ENCODE measurements at regions of chr2 and their contacts with region 1.

Region 1: GRCh38 chr2:200713003-200713703 is 98.6 kb upstream of the BZW1 start:
- DNase-seq: peak; percentile 87 to 97
- ATAC-seq: peak; percentile 94 to 99 (median 99)
- H3K4me3 ChIP-seq: peak overlapping the region; percentile 6
- H3K4me3 Mint-ChIP-seq: peak overlapping the region; percentile 78
- H3K27ac ChIP-seq: peak overlapping the region; percentile 97
- H3K27ac Mint-ChIP-seq: peak overlapping the region; percentile 96 to 98
- H3K4me1 ChIP-seq: peaks cover 9% of the 10 kb centered on the region
- H3K4me1 Mint-ChIP-seq: peaks cover 12 to 13% of the 10 kb centered on the region in 2 donors
- H3K27me3 ChIP-seq: no peaks in the 10 kb centered on the region
- H3K27me3 Mint-ChIP-seq: peaks cover 0 to 7% of the 10 kb centered on the region in 2 donors
- CTCF ChIP-seq: peak; percentile 74

Region 2: DNA sequence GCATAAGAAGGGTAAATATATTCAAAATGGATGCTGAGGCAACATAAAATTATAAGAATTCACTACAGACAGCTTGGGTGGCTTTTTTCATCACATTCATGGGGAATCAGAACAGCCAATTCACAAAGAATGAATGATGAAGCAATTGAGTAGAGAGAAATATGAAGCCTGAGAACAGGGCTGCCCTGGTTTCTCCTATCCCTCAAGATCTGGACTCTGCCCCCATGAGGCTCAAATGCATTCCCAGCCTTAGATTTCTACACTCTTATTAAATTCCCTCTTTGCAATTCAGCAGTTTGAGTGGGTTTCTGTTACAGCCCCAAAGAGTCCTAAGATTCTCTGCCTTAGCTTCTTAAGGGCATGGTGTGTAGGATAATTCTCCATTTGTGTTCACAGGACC is 585.3 kb before region 1 on chr2:
- intact Hi-C with region 1: no loop called
- DNase-seq: no peak
- ATAC-seq: no peak
- H3K4me3 ChIP-seq: no peak overlapping the region
- H3K4me3 Mint-ChIP-seq: no peak overlapping the region
- H3K27ac ChIP-seq: no peak overlapping the region
- H3K27ac Mint-ChIP-seq: no peak overlapping the region
- H3K4me1 ChIP-seq: no peaks in the 10 kb centered on the region
- H3K4me1 Mint-ChIP-seq: no peaks in the 10 kb centered on the region
- H3K27me3 ChIP-seq: no peaks in the 10 kb centered on the region
- H3K27me3 Mint-ChIP-seq: peaks cover 3 to 8% of the 10 kb centered on the region in 2 donors
- CTCF ChIP-seq: no peak

Region 3: GRCh38 chr2:200274116-200275075 is 438.8 kb before region 1 on chr2:
- intact Hi-C with region 1: no loop called
- DNase-seq: no peak
- ATAC-seq: no peak
- H3K4me3 ChIP-seq: no peak overlapping the region
- H3K4me3 Mint-ChIP-seq: no peak overlapping the region
- H3K27ac ChIP-seq: no peak overlapping the region
- H3K27ac Mint-ChIP-seq: no peak overlapping the region
- H3K4me1 ChIP-seq: no peaks in the 10 kb centered on the region
- H3K4me1 Mint-ChIP-seq: no peaks in the 10 kb centered on the region
- H3K27me3 ChIP-seq: no peaks in the 10 kb centered on the region
- H3K27me3 Mint-ChIP-seq: peaks cover 8 to 36% of the 10 kb centered on the region in 2 donors
- CTCF ChIP-seq: no peak

Region 4: DNA sequence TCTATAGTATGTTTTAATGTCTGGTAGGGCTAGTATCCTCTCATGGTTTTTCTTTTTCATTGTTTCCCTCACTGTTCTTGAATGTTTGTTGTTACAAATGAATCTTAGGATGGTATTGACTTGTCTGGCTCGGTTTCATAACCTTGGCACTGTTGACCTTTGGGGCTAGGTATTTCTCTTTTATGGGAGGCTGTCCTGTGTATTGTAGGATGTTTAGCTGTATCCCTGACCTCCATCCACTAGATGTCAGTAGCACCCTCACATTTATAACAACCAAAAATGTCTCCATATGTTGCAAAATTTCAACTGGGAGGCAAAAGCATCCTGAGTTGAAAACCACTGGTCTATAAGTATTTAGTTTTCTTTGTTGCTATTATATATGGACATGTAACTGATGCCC is 134.4 kb before region 1 on chr2:
- intact Hi-C with region 1: loop called (anchors 10 kb)
- DNase-seq: peak in 1 of 2 donors; percentile 50
- ATAC-seq: peak; percentile 46 to 49 (median 47)
- H3K4me3 ChIP-seq: no peak overlapping the region
- H3K4me3 Mint-ChIP-seq: no peak overlapping the region
- H3K27ac ChIP-seq: no peak overlapping the region
- H3K27ac Mint-ChIP-seq: no peak overlapping the region
- H3K4me1 ChIP-seq: no peaks in the 10 kb centered on the region
- H3K4me1 Mint-ChIP-seq: no peaks in the 10 kb centered on the region
- H3K27me3 ChIP-seq: no peaks in the 10 kb centered on the region
- H3K27me3 Mint-ChIP-seq: no peaks in the 10 kb centered on the region
- CTCF ChIP-seq: peak; percentile 20

Region 5: DNA sequence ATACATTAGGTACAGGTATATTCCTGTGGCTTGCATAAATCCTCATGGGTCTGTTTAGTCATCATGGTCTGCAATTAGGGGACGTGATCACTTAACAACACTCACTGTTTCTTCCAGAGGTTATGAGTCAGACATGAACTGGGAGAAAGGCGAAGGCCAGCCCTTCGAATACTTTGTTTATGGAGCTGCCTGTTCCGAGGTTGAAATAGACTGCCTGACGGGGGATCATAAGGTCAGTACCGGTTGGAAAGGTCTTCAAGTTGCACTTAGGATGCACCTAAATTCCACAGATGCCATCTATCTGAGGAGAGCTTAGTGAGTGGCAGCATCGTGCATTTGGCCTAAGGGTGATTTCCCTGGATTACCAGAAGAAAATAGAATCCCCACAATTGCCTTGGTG is 50.4 kb before region 1 on chr2:
- intact Hi-C with region 1: no loop called
- DNase-seq: no peak
- ATAC-seq: no peak
- H3K4me3 ChIP-seq: no peak overlapping the region
- H3K4me3 Mint-ChIP-seq: no peak overlapping the region
- H3K27ac ChIP-seq: no peak overlapping the region
- H3K27ac Mint-ChIP-seq: no peak overlapping the region
- H3K4me1 ChIP-seq: no peaks in the 10 kb centered on the region
- H3K4me1 Mint-ChIP-seq: no peaks in the 10 kb centered on the region
- H3K27me3 ChIP-seq: no peaks in the 10 kb centered on the region
- H3K27me3 Mint-ChIP-seq: peaks cover 0 to 7% of the 10 kb centered on the region in 2 donors
- CTCF ChIP-seq: no peak

Region 6: GRCh38 chr2:200811336-200812121 is 98.4 kb after region 1 on chr2 and contains the start of gene BZW1:
- intact Hi-C with region 1: loop called (anchors 1 kb)
- DNase-seq: peak; percentile 93 to 98
- ATAC-seq: peak; percentile 78 to 92 (median 78)
- H3K4me3 ChIP-seq: peak within 1 kb of the TSS; percentile 61
- H3K4me3 Mint-ChIP-seq: peak within 1 kb of the TSS; percentile 95
- H3K27ac ChIP-seq: peak within 1 kb of the TSS; percentile 99
- H3K27ac Mint-ChIP-seq: peak within 1 kb of the TSS; percentile 93 to 98
- H3K4me1 ChIP-seq: peaks cover 18% of the 10 kb centered on the region
- H3K4me1 Mint-ChIP-seq: peaks cover 53 to 56% of the 10 kb centered on the region in 2 donors
- H3K27me3 ChIP-seq: no peaks in the 10 kb centered on the region
- H3K27me3 Mint-ChIP-seq: no peaks in the 10 kb centered on the region
- CTCF ChIP-seq: no peak
- total RNA-seq, gene BZW1: 393 to 417 (median 411) TPM

Region 7: DNA sequence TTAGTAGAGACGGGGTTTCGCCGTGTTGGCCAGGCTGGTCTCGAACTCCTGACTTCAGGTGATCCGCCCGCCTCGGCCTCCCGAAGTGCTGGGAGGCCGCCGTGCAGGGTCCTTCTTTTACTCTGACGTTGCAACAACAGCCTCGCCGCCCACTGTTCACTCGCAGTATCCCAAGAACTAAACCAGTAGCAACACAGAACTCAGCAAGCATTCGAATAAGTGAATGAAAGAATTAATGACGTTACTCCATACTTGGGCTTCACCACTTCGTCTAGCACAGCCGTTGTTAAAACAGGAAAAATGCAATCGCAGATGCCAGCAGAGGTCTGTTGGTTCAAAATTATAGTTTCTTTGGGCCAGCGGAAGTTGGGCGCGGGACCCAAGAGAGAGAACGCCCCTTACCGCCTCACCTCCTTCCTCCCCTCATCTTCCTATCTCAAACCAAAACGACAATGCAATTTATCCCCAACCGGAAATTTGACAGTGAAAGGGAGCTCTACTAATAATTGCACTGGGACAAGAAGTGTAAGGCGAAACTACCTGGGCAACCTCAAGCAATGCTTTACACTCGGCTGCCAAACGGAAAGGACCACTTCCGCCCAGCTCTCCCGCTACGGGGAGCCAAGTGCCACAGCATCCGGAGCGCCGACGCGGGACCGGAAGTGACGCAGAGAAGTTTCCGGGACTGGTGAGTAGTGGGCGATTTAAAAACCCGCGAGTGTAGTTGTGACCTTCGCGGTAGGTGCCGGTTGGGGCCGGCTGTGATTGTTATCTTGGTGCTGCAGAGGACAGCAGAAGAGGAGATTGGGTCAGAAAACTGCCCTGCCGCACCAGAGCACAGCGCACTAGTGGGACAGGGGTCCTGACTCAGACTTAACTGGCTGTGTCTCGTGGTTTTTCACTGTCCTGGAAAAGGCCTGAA is 175.8 kb after region 1 on chr2 and contains the starts of genes NIF3L1 and PPIL3:
- intact Hi-C with region 1: loop called (anchors 1 kb)
- DNase-seq: peak; percentile 95 to 99
- ATAC-seq: peak; percentile 76 to 91 (median 84)
- H3K4me3 ChIP-seq: peak within 1 kb of the TSS; percentile 72
- H3K4me3 Mint-ChIP-seq: peak within 1 kb of the TSS; percentile 99
- H3K27ac ChIP-seq: peak within 1 kb of the TSS; percentile 91
- H3K27ac Mint-ChIP-seq: peak within 1 kb of the TSS; percentile 99 to 100
- H3K4me1 ChIP-seq: peaks cover 28% of the 10 kb centered on the region
- H3K4me1 Mint-ChIP-seq: peaks cover 39 to 49% of the 10 kb centered on the region in 2 donors
- H3K27me3 ChIP-seq: no peaks in the 10 kb centered on the region
- H3K27me3 Mint-ChIP-seq: no peaks in the 10 kb centered on the region
- CTCF ChIP-seq: no peak
- total RNA-seq, gene NIF3L1: 8.8 to 13.3 (median 9.6) TPM
- total RNA-seq, gene PPIL3: 30.0 to 39.9 (median 33.3) TPM

Region 8: DNA sequence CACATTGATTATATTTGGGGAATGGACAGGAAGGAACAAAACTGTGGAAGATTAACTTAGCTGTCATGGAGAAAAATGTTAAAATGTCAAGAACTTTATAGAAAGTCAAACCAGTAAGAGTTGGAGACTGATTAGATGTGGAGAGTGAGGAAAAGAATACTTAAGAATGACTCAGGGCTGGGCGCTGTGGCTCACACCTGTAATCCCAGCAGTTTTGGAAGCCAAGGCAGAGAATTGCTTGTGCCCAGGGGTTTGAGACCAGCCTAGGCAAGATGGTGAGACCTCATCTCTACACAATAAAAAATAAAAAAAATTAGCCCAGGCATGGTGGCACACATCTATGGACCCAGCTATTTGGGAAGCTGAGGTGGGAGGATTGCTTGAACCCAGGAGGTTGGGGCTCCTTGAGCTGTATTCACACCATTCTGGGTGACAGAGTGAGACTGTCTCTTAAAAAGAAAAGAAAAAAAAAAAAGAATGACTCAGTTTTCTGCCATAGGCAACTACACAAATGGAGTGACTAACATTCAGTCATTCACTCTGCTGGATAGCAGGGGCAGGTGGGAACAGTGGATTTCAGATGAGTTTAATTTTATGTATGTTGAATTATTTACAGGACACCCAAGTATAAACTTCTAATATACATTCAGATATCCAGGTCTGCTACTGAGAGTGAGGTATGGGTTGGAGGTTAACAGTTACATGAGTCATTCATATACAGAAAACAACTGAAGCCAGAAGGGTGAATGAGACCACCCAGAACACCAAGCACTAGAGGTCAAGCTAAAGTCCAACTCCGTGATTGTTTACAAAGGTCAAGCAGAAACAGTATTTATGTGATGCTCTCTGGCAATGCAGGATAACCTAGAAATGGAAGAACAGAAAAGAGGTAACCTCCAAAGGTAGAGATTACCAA is 216.4 kb after region 1 on chr2:
- intact Hi-C with region 1: no loop called
- DNase-seq: no peak
- ATAC-seq: no peak
- H3K4me3 ChIP-seq: no peak overlapping the region
- H3K4me3 Mint-ChIP-seq: no peak overlapping the region
- H3K27ac ChIP-seq: no peak overlapping the region
- H3K27ac Mint-ChIP-seq: peak overlapping the region; percentile 9 to 49
- H3K4me1 ChIP-seq: no peaks in the 10 kb centered on the region
- H3K4me1 Mint-ChIP-seq: no peaks in the 10 kb centered on the region
- H3K27me3 ChIP-seq: no peaks in the 10 kb centered on the region
- H3K27me3 Mint-ChIP-seq: no peaks in the 10 kb centered on the region
- CTCF ChIP-seq: no peak

Region 9: GRCh38 chr2:201071479-201072200 is 358.5 kb after region 1 on chr2 and contains the starts of genes HYCC2 and NDUFB3:
- intact Hi-C with region 1: loop called (anchors 2 kb)
- DNase-seq: peak; percentile 90 to 98
- ATAC-seq: peak; percentile 92 to 99 (median 96)
- H3K4me3 ChIP-seq: peak within 1 kb of the TSS; percentile 72
- H3K4me3 Mint-ChIP-seq: peak within 1 kb of the TSS; percentile 97
- H3K27ac ChIP-seq: peak within 1 kb of the TSS; percentile 90
- H3K27ac Mint-ChIP-seq: peak within 1 kb of the TSS; percentile 93 to 100
- H3K4me1 ChIP-seq: peaks cover 12% of the 10 kb centered on the region
- H3K4me1 Mint-ChIP-seq: peaks cover 43 to 46% of the 10 kb centered on the region in 2 donors
- H3K27me3 ChIP-seq: no peaks in the 10 kb centered on the region
- H3K27me3 Mint-ChIP-seq: no peaks in the 10 kb centered on the region
- CTCF ChIP-seq: peak; percentile 30
- total RNA-seq, gene HYCC2: 54.2 to 62.5 (median 60.1) TPM
- total RNA-seq, gene NDUFB3: 23.5 to 32.7 (median 30.7) TPM

Region 10: GRCh38 chr2:201231781-201232466 is 518.8 kb after region 1 on chr2:
- intact Hi-C with region 1: loop called (anchors 1 kb)
- DNase-seq: peak; percentile 81 to 97
- ATAC-seq: peak; percentile 68 to 85 (median 71)
- H3K4me3 ChIP-seq: no peak overlapping the region
- H3K4me3 Mint-ChIP-seq: peak overlapping the region; percentile 93
- H3K27ac ChIP-seq: peak overlapping the region; percentile 13
- H3K27ac Mint-ChIP-seq: peak overlapping the region; percentile 97
- H3K4me1 ChIP-seq: peaks cover 38% of the 10 kb centered on the region
- H3K4me1 Mint-ChIP-seq: peaks cover 67 to 71% of the 10 kb centered on the region in 2 donors
- H3K27me3 ChIP-seq: no peaks in the 10 kb centered on the region
- H3K27me3 Mint-ChIP-seq: no peaks in the 10 kb centered on the region
- CTCF ChIP-seq: peak; percentile 96

Region 11: GRCh38 chr2:202033321-202034248 is 1320.4 kb after region 1 on chr2 and contains the start of gene FZD7:
- intact Hi-C with region 1: loop called (anchors 5 kb)
- DNase-seq: peak; percentile 78 to 89
- ATAC-seq: peak; percentile 83 to 91 (median 86)
- H3K4me3 ChIP-seq: peak within 1 kb of the TSS; percentile 94
- H3K4me3 Mint-ChIP-seq: peak within 1 kb of the TSS; percentile 92
- H3K27ac ChIP-seq: peak within 1 kb of the TSS; percentile 38
- H3K27ac Mint-ChIP-seq: peak within 1 kb of the TSS in 1 of 2 donors; percentile 41
- H3K4me1 ChIP-seq: peaks cover 27% of the 10 kb centered on the region
- H3K4me1 Mint-ChIP-seq: peaks cover 14 to 15% of the 10 kb centered on the region in 2 donors
- H3K27me3 ChIP-seq: peaks cover 28% of the 10 kb centered on the region
- H3K27me3 Mint-ChIP-seq: peaks cover 15 to 29% of the 10 kb centered on the region in 2 donors
- CTCF ChIP-seq: no peak
- total RNA-seq, gene FZD7: 0.27 to 1.6 TPM in 2 of 3 donors, not detected in the other